Activated CD4-positive, alpha-beta memory T cell treated with anti-CD3 and anti-CD28 coated beads, Interleukin-2, amount 10 ng/mL, durations not matched to agents 7 days and 5 days (primary cell): ENCODE measurements at regions of chr14 and their contacts with region 1.

Region 1: DNA sequence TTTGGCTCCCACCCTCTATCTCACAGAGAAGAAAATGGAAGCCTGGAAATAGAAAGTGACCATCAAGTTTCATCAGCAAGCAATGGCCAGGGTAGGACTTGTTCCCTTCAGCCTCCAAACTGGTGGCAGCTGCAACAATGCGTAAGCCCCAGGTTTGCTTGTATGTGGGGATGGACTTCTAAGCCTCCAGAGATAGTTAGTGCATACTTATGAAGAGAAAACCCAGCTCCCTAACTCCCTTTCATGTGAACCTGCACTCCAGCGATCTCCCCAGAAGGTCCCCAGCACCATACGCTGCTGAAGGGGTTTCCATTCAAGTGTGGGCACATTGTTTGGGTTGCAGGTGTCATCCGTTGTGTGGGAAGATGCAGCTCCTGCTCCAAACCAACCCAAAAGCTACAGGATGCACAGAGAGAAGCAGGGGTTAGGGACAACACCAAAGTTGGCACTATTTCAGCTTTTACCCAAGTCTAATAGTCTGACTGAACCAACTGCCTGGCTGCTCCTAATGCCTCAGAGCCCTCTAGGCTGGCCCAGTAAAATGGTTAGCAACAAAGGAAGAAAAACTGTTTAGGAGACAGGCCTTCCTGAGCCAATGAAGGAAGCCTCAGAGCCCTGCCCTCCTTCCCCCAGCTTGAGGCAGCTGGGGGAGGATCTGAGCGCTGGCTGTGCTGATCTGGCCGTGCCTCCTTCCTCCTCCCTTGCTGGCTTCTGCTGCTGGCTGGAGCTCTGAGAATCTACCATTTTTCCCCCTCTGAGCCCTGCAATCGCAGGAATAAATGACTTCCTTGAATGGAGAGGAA is 12.3 kb downstream of the ZFP36L1 start:
- DNase-seq: peak; percentile 70
- H3K4me3 Mint-ChIP-seq: peak overlapping the region; percentile 74
- H3K27ac Mint-ChIP-seq: peak overlapping the region; percentile 99
- H3K4me1 Mint-ChIP-seq: peaks cover 74% of the 10 kb centered on the region
- H3K27me3 Mint-ChIP-seq: no peaks in the 10 kb centered on the region

Region 2: DNA sequence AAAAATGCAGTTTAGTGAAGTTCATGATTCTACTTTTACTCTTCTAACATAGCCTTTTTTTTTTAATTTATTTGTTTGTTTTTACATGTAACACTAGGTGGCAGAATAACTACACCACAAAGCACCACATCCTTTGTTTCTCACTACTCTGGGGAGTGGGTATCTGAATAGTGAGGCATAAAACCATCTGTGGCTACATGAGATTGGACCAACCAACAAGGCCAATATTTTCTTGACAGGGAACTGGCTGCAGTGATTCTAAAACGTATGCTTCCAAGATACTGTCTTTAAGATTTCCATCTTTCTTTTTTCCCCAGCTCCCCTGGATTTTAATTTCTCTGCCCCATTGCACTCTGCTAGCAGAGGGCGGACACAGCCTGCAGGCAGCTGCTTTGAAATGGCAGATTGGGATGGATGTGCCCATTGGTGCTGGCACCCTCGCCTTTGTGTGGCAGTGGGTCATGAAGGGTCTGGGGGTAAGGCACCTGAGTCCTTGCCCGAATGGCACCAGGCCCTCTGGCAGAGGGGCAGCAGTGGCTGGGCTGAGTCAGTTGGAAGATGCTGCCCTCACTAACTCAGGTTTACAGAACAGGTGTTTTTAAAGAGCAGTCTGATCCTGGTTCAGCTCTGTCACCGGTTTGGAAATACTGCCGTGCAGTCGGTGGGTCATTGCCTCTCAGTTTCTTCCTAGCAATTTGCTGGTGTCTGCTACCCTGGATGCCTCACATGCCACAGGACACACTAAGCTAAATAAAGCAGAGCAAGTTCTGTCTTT is 531.9 kb before region 1 on chr14:
- CTCF ChIA-PET with region 1: interaction called, 11 read pairs
- POLR2A ChIA-PET with region 1: interaction called, 60 read pairs
- DNase-seq: no peak
- H3K4me3 Mint-ChIP-seq: no peak overlapping the region
- H3K27ac Mint-ChIP-seq: no peak overlapping the region
- H3K4me1 Mint-ChIP-seq: peaks cover 15% of the 10 kb centered on the region
- H3K27me3 Mint-ChIP-seq: no peaks in the 10 kb centered on the region

Region 3: DNA sequence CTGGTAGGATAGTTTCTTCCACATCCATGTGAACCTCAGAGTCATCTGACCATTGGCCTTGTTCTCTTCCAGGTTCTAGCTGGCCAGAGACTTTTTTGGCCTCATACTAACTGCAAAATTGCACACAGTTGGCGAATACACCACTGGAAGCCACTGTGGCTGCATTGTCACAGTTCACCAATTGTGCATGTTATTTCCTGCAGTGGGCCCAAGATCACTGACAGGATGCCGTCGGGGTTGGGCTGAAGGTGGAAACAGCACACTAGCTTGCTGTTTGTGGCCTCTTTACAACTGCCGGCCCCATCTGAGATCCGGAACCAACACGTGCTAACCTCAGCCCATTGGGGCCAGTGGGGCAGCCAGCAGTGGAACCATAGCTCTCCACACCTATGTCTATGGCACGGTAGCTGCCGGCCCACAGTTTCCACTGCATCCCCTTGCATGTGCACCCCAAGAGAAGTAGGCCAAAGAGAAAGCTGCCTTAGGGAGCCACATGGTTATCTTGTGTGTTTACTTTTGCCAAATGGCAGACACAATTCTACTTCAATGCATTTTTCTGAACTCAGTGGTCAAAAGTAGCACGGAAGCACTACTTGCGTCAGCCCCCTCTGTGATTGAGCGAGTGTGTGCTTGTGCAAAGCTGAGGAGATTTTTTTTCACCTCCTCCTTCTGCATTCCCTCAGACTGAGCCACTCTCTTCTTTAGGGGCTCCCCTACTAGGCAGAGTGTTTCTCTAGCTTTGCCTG is 497.0 kb before region 1 on chr14:
- CTCF ChIA-PET with region 1: no interaction called
- POLR2A ChIA-PET with region 1: interaction called, 45 read pairs
- DNase-seq: peak; percentile 79
- H3K4me3 Mint-ChIP-seq: peak overlapping the region; percentile 47
- H3K27ac Mint-ChIP-seq: peak overlapping the region; percentile 96
- H3K4me1 Mint-ChIP-seq: peaks cover 48% of the 10 kb centered on the region
- H3K27me3 Mint-ChIP-seq: no peaks in the 10 kb centered on the region

Region 4: GRCh38 chr14:68663385-68664076 is 117.0 kb before region 1 on chr14:
- CTCF ChIA-PET with region 1: interaction called, 3 read pairs
- POLR2A ChIA-PET with region 1: interaction called, 21 read pairs
- DNase-seq: peak; percentile 33
- H3K4me3 Mint-ChIP-seq: peak overlapping the region; percentile 70
- H3K27ac Mint-ChIP-seq: peak overlapping the region; percentile 79
- H3K4me1 Mint-ChIP-seq: peaks cover 34% of the 10 kb centered on the region
- H3K27me3 Mint-ChIP-seq: no peaks in the 10 kb centered on the region

Region 5: DNA sequence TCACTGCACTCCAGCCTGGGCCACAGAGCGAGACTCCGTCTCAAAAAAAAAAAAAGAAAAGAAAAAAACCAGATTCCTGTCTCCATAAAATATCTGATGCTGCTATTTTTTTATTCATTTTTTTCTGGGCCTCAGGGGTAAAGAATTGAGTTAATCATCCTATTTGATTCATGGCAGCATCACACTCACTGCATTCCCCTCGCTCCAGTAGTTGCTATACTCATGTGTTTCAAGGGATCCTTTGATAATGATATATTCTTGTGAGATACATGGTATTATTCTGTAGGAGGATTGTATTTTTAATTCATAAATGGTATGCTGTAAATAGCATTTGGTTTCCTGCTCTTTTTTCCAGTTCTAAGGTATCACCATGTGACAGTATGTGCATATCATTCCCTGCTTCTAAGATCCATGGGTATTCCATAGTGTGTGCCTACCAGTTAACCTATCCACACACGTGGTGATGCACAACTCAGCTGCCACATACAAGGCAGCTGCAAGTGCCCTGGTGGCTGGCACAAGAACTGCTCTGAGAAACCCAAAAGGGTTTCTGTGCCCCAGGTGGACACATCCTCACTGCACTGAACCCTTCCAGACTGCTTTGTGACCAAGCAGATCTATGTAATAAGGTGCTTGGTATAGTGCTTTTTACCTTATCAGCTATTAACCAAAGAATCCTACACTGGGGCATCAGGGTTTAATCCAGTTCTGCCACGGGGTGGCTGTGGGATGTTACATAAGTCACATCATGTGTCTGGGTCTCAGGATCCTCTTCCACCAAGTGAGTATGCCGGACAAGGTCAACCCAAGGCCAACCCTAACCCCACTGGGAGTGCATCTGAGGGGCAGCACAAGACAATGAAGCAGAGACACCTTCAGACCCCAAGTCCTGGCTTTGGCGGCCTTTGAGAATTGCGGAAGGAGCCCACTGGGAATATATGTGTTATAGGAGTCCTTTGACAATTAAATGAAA is 62.2 kb before region 1 on chr14:
- CTCF ChIA-PET with region 1: interaction called, 3 read pairs
- POLR2A ChIA-PET with region 1: interaction called, 25 read pairs
- DNase-seq: peak; percentile 31
- H3K4me3 Mint-ChIP-seq: no peak overlapping the region
- H3K27ac Mint-ChIP-seq: no peak overlapping the region
- H3K4me1 Mint-ChIP-seq: peaks cover 38% of the 10 kb centered on the region
- H3K27me3 Mint-ChIP-seq: no peaks in the 10 kb centered on the region

Region 6: DNA sequence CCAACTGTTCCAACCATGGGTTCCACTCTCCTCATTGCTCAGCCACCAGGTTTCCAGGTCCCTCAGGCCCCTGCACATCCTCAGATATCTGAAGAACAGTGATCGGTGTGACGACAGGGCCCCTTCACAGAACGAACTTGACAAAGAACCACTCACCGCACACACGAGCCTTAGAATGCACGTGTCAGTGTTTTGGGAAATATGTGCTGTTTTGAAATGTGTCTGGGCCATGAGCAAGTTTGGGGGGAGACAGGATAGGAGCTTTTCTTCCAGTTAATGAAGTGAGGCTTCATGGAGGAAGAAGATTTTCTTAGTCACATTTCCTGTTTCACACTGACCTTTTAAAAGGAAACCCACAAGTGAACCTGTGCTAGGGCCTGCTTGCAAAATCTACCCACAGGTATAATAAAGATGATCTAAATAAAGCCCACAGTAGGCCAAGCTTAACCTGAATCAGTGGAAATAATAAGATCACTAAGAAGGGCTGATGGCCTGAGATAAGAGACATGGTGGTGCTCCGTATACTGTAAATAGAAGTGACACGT is 46.3 kb before region 1 on chr14:
- CTCF ChIA-PET with region 1: no interaction called
- POLR2A ChIA-PET with region 1: interaction called, 31 read pairs
- DNase-seq: peak; percentile 50
- H3K4me3 Mint-ChIP-seq: no peak overlapping the region
- H3K27ac Mint-ChIP-seq: peak overlapping the region; percentile 62
- H3K4me1 Mint-ChIP-seq: peaks cover 35% of the 10 kb centered on the region
- H3K27me3 Mint-ChIP-seq: no peaks in the 10 kb centered on the region

Region 7: DNA sequence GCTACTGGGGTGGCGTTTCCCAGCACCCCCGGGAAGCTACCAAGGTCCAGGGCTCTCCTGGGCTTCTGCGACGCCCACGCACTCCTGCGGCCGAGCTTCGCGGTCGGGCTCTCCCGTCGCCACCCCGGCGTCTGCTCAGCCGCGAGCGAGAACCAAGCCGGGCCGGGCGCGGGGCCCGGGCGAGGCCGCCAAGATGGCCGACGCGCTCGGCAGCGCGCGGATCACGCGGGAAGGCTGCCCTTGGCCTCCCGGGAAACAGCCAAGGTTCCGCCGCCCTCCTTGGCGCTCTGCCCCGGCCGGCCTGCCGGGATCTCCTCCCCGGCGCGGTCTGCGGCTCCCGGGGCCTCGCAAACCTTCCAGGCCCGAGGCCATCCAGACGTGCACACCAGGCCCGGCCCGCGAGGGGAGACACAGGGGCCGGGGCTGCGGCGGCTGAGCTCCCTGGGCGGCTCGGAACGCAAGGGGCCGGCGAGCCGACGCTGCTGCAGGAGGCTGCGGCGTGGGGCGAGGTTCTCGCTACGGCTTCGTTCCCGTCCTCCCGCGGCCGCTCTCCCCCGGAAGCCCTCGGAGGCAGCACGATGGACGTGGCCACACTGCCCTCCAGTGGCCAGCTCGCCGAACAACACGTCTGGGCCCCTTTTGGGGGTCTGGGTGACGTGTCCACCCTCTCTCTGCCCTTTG is 35.8 kb after region 1 on chr14:
- CTCF ChIA-PET with region 1: interaction called, 26 read pairs
- POLR2A ChIA-PET with region 1: interaction called, 496 read pairs
- DNase-seq: peak; percentile 90
- H3K4me3 Mint-ChIP-seq: peak overlapping the region; percentile 72
- H3K27ac Mint-ChIP-seq: peak overlapping the region; percentile 84
- H3K4me1 Mint-ChIP-seq: peaks cover 53% of the 10 kb centered on the region
- H3K27me3 Mint-ChIP-seq: no peaks in the 10 kb centered on the region